Psoas muscle (tissue), 8 donors: ENCODE measurements at regions of chr1 and their contacts with region 1.

Region 1: GRCh38 chr1:202306535-202307345 is 35.0 kb downstream of the UBE2T start:
- DNase-seq: no peak
- ATAC-seq: no peak
- H3K4me3 ChIP-seq: no peak overlapping the region
- H3K27ac ChIP-seq: no peak overlapping the region
- H3K4me1 ChIP-seq: no peaks in the 10 kb centered on the region
- H3K27me3 ChIP-seq: no peaks in the 10 kb centered on the region
- CTCF ChIP-seq: no peak

Region 2: GRCh38 chr1:202229376-202229775 is 77.4 kb before region 1 on chr1:
- intact Hi-C with region 1: loop called in 1 of 2 experiments (anchors 2 kb)
- DNase-seq: no peak
- ATAC-seq: no peak
- H3K4me3 ChIP-seq: no peak overlapping the region
- H3K27ac ChIP-seq: no peak overlapping the region
- H3K4me1 ChIP-seq: no peaks in the 10 kb centered on the region
- H3K27me3 ChIP-seq: no peaks in the 10 kb centered on the region
- CTCF ChIP-seq: no peak